Posterior vena cava (tissue), 2 donors: ENCODE measurements at regions of chr16 and their contacts with region 1.

Region 1: GRCh38 chr16:86129541-86129940 is 230.6 kb downstream of the IRF8 start:
- DNase-seq: no peak

Region 2: DNA sequence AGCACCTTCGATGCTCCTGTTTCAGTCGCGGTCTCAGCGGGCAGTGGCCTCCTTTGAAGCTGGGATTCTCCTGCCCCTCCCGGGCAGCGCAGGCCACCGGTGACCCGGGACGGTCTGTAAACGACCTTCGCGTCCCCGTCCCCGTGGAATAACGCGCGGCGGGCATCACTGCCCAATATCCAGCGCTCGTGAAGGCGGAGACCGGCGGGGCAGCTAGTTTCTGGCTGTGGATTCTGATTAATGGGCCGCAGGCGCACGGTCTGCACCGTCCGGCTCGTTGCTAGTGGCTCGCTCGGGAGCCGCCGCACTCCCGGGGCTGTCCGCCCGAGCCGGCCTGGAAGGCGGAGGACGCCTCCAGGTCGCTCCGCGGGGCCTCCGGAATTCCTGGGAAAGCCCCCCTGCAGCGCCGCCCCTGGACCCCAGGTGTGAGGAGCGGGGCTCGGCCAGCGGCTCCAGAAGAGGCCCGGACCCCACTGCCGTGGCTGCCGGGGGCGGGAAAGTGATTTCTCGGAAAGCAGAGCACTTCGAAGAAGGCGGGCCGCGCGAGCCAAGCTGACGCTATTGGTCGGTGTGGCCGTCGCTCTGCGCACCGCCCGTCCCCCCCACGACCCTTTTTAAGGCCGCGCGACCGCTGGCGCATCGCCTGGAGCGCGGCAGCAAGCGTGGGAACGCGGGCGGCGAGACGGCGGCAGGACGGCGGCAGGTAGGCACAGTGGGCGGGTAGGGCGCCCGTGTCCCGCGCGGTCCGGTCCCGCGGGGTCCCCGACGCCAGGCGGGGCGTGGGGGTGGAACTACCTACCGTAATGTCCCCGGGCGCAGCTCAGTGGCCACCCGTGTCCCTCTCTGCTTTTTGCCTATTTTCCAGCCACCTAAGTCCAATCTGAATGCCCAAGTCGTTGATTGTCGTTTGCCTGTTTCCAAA is 230.8 kb before region 1 on chr16 and contains the start of gene IRF8:
- intact Hi-C with region 1: no loop called
- DNase-seq: peak; percentile 93
- total RNA-seq, gene IRF8: 6.3 to 18.7 TPM

Region 3: GRCh38 chr16:85948138-85948509 is 181.4 kb before region 1 on chr16:
- intact Hi-C with region 1: no loop called
- DNase-seq: no peak

Region 4: GRCh38 chr16:86171329-86171728 is 41.8 kb after region 1 on chr16:
- intact Hi-C with region 1: loop called in 1 of 2 experiments (anchors 1 kb)
- DNase-seq: no peak